Pancreas (tissue), 10 donors: ENCODE measurements at regions of chr1 and their contacts with region 1.

Region 1: GRCh38 chr1:243343970-243344937 is 88.4 kb downstream of the SDCCAG8 start:
- DNase-seq: no peak
- ATAC-seq: peak; percentile 73 to 93 (median 90)
- H3K4me3 ChIP-seq: no peak overlapping the region
- H3K27ac ChIP-seq: no peak overlapping the region
- H3K4me1 ChIP-seq: peaks cover 0 to 7% (median 3%) of the 10 kb centered on the region in 3 donors
- H3K27me3 ChIP-seq: no peaks in the 10 kb centered on the region
- CTCF ChIP-seq: peak; percentile 25 to 60 (median 50)

Region 2: GRCh38 chr1:243378669-243379068 is 34.4 kb after region 1 on chr1:
- intact Hi-C with region 1: no loop called
- DNase-seq: no peak
- ATAC-seq: no peak
- H3K4me3 ChIP-seq: no peak overlapping the region
- H3K27ac ChIP-seq: no peak overlapping the region
- H3K4me1 ChIP-seq: no peaks in the 10 kb centered on the region
- H3K27me3 ChIP-seq: no peaks in the 10 kb centered on the region
- CTCF ChIP-seq: no peak

Region 3: GRCh38 chr1:243751506-243751905 is 407.3 kb after region 1 on chr1:
- intact Hi-C with region 1: loop called in 1 of 3 experiments (anchors 10 kb)
- DNase-seq: no peak
- ATAC-seq: no peak
- H3K4me3 ChIP-seq: no peak overlapping the region
- H3K27ac ChIP-seq: no peak overlapping the region
- H3K4me1 ChIP-seq: no peaks in the 10 kb centered on the region
- H3K27me3 ChIP-seq: no peaks in the 10 kb centered on the region
- CTCF ChIP-seq: no peak